Gastrocnemius medialis (tissue), 4 donors: ENCODE measurements at regions of chr11 and their contacts with region 1.

Region 1: DNA sequence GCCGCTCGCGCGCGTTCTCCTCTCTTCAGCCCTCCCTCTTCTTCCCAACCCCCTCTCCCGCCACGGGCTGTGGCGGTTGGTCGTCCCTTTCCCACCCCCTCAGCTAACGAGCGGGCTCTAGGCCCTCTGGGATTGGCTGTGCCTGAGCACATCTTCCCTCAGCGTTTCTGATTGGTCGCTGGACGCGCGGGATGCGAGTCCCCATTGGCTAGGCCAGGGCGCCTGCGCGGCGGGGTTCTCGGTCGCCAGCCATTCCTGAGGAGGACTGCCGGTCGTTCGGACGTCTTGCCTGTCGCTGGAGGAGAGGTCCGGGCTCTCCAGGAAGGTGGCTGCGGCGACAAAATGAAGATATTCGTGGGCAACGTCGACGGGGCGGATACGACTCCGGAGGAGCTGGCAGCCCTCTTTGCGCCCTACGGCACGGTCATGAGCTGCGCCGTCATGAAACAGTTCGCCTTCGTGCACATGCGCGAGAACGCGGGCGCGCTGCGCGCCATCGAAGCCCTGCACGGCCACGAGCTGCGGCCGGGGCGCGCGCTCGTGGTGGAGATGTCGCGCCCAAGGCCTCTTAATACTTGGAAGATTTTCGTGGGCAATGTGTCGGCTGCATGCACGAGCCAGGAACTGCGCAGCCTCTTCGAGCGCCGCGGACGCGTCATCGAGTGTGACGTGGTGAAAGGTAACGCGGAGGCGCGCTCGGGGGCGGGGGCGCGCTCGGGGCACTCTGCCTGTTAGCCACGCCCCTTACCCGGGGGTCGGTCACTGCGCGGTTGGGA is at the start of gene RBM14:
- DNase-seq: peak; percentile 99 to 100
- ATAC-seq: peak; percentile 97 to 98
- H3K4me3 ChIP-seq: peak within 1 kb of the TSS; percentile 77 to 96 (median 93)
- H3K27ac ChIP-seq: peak within 1 kb of the TSS; percentile 92 to 95 (median 94)
- H3K4me1 ChIP-seq: peaks cover 35 to 43% of the 10 kb centered on the region in 2 donors
- H3K27me3 ChIP-seq: no peaks in the 10 kb centered on the region
- CTCF ChIP-seq: peak in 1 of 5 experiments; percentile 11
- POLR2A ChIP-seq: peak; percentile 97 to 99
- total RNA-seq, gene RBM14: 17.0 to 43.2 (median 29.4) TPM

Region 2: GRCh38 chr11:66371627-66372415 is 244.7 kb before region 1 on chr11 and contains the start of gene SLC29A2:
- in situ Hi-C with region 1: no loop called
- intact Hi-C with region 1: loop called (anchors 2 kb)
- DNase-seq: peak; percentile 73 to 87
- ATAC-seq: peak; percentile 34 to 35
- H3K4me3 ChIP-seq: peak within 1 kb of the TSS; percentile 73 to 96 (median 78)
- H3K27ac ChIP-seq: peak within 1 kb of the TSS; percentile 97 to 99 (median 98)
- H3K4me1 ChIP-seq: peaks cover 48 to 58% of the 10 kb centered on the region in 2 donors
- H3K27me3 ChIP-seq: no peaks in the 10 kb centered on the region
- CTCF ChIP-seq: no peak
- POLR2A ChIP-seq: peak; percentile 56 to 69
- total RNA-seq, gene SLC29A2: 39.2 to 106 (median 70.6) TPM

Region 3: GRCh38 chr11:66545701-66546367 is 70.7 kb before region 1 on chr11 and contains the start of gene ZDHHC24:
- in situ Hi-C with region 1: no loop called
- intact Hi-C with region 1: loop called (anchors 2 kb)
- DNase-seq: peak; percentile 96 to 97
- ATAC-seq: peak; percentile 86 to 92
- H3K4me3 ChIP-seq: peak within 1 kb of the TSS; percentile 70 to 99 (median 80)
- H3K27ac ChIP-seq: peak within 1 kb of the TSS; percentile 79 to 94 (median 91)
- H3K4me1 ChIP-seq: peaks cover 25 to 50% of the 10 kb centered on the region in 2 donors
- H3K27me3 ChIP-seq: no peaks in the 10 kb centered on the region
- CTCF ChIP-seq: no peak
- POLR2A ChIP-seq: peak; percentile 49 to 75
- total RNA-seq, gene ZDHHC24: 7.2 to 13.0 (median 11.2) TPM

Region 4: GRCh38 chr11:66592457-66593302 is 23.9 kb before region 1 on chr11 and contains the starts of genes CCDC87 and CCS:
- in situ Hi-C with region 1: no loop called
- intact Hi-C with region 1: loop called (anchors 2 kb)
- DNase-seq: peak; percentile 96 to 97
- ATAC-seq: peak; percentile 97 to 98
- H3K4me3 ChIP-seq: peak within 1 kb of the TSS; percentile 63 to 98 (median 82)
- H3K27ac ChIP-seq: peak within 1 kb of the TSS; percentile 82 to 91 (median 88)
- H3K4me1 ChIP-seq: peaks cover 12 to 21% of the 10 kb centered on the region in 2 donors
- H3K27me3 ChIP-seq: no peaks in the 10 kb centered on the region
- CTCF ChIP-seq: peak; percentile 79 to 94 (median 86)
- POLR2A ChIP-seq: peak; percentile 88
- total RNA-seq, gene CCDC87: 0.13 to 0.41 TPM in 2 of 4 donors, not detected in the others
- total RNA-seq, gene CCS: 9.0 to 12.3 (median 11.7) TPM

Region 5: DNA sequence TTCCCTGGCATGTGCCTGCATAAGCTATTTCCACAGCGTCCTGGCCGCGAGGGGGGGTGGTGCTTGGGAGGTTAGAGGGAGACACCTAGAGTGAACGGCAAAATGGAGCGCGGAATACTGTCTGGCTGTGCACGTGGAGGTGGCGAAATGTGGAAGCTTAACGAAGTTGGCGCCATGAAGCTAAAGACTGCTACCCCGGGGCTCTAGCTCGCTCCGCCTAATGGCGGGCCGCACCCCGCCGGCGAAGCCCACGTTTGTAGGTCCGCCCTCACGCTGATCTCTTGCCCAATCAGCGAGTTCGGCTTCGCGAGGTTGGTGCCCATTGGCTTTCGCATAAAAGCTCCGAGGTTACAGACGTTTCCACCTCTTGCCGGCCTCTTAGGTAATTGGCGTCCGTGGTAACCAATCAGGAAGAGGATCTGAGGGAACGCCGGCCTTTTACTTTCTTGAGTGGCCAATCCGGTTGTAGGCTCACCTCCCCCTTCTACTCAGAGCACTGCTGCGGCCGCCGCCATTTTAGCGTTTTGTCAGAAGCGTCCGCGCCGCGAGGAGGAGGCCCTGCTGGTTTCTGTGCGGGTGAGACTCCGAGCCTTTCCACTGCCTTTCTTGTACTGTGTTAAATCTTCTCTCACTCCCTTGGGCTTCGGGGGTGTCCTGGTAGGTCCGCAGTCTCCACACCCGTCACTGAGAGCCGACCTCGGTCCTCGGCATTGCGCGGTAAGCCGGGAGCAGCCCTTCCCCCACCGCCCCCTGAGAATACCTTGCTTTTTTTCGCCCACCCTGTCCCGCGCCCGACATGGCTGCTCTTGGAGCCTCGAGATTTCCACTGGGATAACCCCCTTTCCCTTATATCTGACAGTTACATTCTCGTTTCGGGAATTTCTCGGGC is 21.9 kb after region 1 on chr11 and contains the start of gene RBM4:
- in situ Hi-C with region 1: no loop called
- intact Hi-C with region 1: loop called (anchors 1 kb)
- DNase-seq: peak; percentile 100
- ATAC-seq: peak; percentile 99
- H3K4me3 ChIP-seq: peak within 1 kb of the TSS; percentile 73 to 90 (median 84)
- H3K27ac ChIP-seq: peak within 1 kb of the TSS; percentile 90 to 94 (median 92)
- H3K4me1 ChIP-seq: peaks cover 49 to 56% of the 10 kb centered on the region in 2 donors
- H3K27me3 ChIP-seq: no peaks in the 10 kb centered on the region
- CTCF ChIP-seq: peak in 2 of 5 experiments; percentile 13 to 28
- POLR2A ChIP-seq: peak; percentile 92 to 95
- total RNA-seq, gene RBM4: 62.4 to 117 (median 69.2) TPM

Region 6: DNA sequence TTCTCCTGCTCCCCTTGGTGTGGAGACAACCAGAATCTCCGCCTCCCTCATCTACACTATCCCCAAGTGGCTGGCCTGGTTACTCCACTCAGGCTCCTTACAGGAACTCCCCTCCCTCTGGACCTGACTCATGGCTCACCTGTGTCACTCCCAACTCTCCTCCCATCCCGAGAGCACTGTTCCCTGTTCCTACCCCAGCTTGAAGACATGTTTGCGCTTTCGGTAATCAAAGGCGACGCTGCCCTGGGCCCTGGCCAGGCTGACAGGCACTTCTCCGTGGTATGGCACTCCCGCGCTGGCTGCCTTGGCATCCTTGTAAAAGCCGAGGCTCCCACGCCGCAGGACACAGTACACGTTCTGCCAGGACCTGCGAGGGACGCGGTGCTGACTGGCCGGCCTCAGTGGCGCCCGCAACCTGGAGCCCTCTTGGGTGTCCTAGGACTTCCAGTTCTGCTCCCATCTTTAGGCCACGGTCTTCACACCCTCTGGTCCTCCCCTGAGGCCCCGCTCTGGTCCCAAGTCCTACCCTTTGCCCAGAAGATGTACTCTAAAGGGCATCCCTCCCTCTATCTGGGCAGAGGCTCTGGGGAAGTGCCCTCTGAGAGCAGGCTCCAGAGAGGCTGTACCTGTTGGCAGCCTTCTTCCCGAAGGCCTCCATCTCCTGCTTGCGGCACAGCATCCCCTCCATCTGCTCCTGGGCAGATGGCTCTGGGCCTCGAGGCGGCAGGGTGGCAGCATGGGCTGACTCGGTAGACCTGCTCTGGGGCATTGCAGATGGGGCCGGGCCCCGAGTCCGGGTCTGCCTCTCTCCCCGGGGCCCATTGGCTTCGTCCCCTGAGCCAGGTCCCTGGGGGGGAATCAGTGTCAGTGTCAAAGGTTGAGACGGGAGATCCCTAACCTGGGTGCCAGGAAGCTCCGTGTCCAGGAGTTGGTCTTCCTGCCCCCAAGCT is 70.5 kb after region 1 on chr11:
- in situ Hi-C with region 1: no loop called
- intact Hi-C with region 1: no loop called
- DNase-seq: no peak
- ATAC-seq: no peak
- H3K4me3 ChIP-seq: no peak overlapping the region
- H3K27ac ChIP-seq: no peak overlapping the region
- H3K4me1 ChIP-seq: no peaks in the 10 kb centered on the region
- H3K27me3 ChIP-seq: no peaks in the 10 kb centered on the region
- CTCF ChIP-seq: no peak
- POLR2A ChIP-seq: no peak

Region 7: GRCh38 chr11:66883016-66883968 is 266.7 kb after region 1 on chr11:
- in situ Hi-C with region 1: no loop called
- intact Hi-C with region 1: no loop called
- DNase-seq: peak; percentile 36 to 73
- ATAC-seq: peak; percentile 68 to 79
- H3K4me3 ChIP-seq: peak overlapping the region; percentile 21 to 45 (median 42)
- H3K27ac ChIP-seq: peak overlapping the region in 3 of 4 donors; percentile 64 to 81 (median 71)
- H3K4me1 ChIP-seq: peaks cover 9 to 51% of the 10 kb centered on the region in 2 donors
- H3K27me3 ChIP-seq: no peaks in the 10 kb centered on the region
- CTCF ChIP-seq: peak; percentile 66 to 82 (median 76)
- POLR2A ChIP-seq: no peak